ENCODE measurements at regions of chr22 and their contacts with region 1.

Region 1: GRCh38 chr22:50525390-50526068 is at the start of gene SCO2:
- DNase-seq: peak; percentile 99
- H3K4me3 Mint-ChIP-seq: peak within 1 kb of the TSS; percentile 90
- H3K27ac Mint-ChIP-seq: peak within 1 kb of the TSS; percentile 88
- H3K4me1 Mint-ChIP-seq: peaks cover 32% of the 10 kb centered on the region
- H3K27me3 Mint-ChIP-seq: no peaks in the 10 kb centered on the region
- total RNA-seq, gene SCO2: 5.3 and 11.2 TPM in 2 replicates

Region 2: GRCh38 chr22:49960159-49961004 is 565.1 kb before region 1 on chr22 and contains the start of gene PIM3:
- intact Hi-C with region 1: loop called (anchors 5 kb)
- DNase-seq: peak; percentile 98
- H3K4me3 Mint-ChIP-seq: peak within 1 kb of the TSS; percentile 94
- H3K27ac Mint-ChIP-seq: peak within 1 kb of the TSS; percentile 95
- H3K4me1 Mint-ChIP-seq: peaks cover 17% of the 10 kb centered on the region
- H3K27me3 Mint-ChIP-seq: no peaks in the 10 kb centered on the region
- total RNA-seq, gene PIM3: 302 and 304 TPM in 2 replicates

Region 3: DNA sequence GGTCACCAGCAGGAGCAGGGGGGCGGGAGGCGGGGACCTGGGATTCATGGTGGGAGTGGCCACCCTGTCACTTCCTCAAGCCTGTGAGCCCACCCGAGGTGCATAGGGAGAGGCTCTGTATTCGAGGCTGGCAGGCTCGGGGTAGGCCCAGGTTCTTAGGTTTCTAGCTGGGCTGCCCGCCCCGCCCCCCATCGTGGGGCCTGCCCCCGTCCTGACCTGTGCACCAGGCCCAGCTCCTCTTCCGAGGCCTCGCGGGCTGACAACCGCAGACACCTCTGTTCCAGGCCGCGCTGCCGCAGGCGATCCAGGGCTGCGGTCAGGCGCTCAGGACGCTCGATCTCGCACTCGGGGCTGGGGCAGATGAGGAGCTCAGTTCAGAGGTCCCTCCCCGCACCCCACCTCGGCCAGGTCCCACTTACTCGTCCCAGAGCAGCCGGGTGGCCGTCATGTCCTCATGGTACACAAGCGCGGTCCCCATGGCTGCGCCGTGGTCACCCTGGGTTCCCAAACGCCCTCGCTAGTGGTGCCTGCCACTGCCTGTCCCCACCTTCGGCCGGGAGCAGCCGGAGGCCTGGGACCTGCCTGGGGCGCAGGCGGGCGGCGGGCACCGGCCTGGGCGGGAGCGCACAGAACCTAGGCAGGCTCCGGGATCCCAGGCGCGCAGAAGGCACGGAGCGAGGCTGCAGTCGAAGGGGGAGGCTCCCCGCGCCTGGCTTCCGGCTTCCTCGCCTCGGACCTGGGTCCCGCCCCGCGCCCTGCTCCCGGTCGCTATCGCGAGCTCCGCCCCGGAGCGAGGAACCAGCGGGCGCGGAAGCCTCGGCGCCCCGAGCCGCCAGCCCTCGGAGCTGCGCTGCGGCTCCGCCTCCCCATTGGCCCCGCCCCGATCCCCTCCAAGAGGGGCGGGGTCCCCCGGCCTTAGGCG is 274.7 kb before region 1 on chr22 and contains the start of gene HDAC10:
- intact Hi-C with region 1: loop called (anchors 2 kb)
- DNase-seq: peak; percentile 96
- H3K4me3 Mint-ChIP-seq: peak within 1 kb of the TSS; percentile 84
- H3K27ac Mint-ChIP-seq: peak within 1 kb of the TSS; percentile 80
- H3K4me1 Mint-ChIP-seq: peaks cover 3% of the 10 kb centered on the region
- H3K27me3 Mint-ChIP-seq: no peaks in the 10 kb centered on the region
- total RNA-seq, gene HDAC10: 62.2 and 64.6 TPM in 2 replicates

Region 4: GRCh38 chr22:50474668-50475492 is 50.6 kb before region 1 on chr22 and contains the start of gene SBF1:
- intact Hi-C with region 1: loop called (anchors 5 kb)
- DNase-seq: peak; percentile 98
- H3K4me3 Mint-ChIP-seq: peak within 1 kb of the TSS; percentile 95
- H3K27ac Mint-ChIP-seq: peak within 1 kb of the TSS; percentile 93
- H3K4me1 Mint-ChIP-seq: peaks cover 39% of the 10 kb centered on the region
- H3K27me3 Mint-ChIP-seq: peaks cover 11% of the 10 kb centered on the region
- total RNA-seq, gene SBF1: 108 and 115 TPM in 2 replicates

Region 5: GRCh38 chr22:50562523-50563412 is 37.2 kb after region 1 on chr22 and contains the start of gene SYCE3:
- intact Hi-C with region 1: loop called (anchors 1 kb)
- DNase-seq: peak; percentile 100
- H3K4me3 Mint-ChIP-seq: peak within 1 kb of the TSS; percentile 94
- H3K27ac Mint-ChIP-seq: peak within 1 kb of the TSS; percentile 85
- H3K4me1 Mint-ChIP-seq: peaks cover 21% of the 10 kb centered on the region
- H3K27me3 Mint-ChIP-seq: peaks cover 14% of the 10 kb centered on the region
- total RNA-seq, gene SYCE3: 0.69 TPM in 1 of 2 replicates, not detected in the other

Region 6: DNA sequence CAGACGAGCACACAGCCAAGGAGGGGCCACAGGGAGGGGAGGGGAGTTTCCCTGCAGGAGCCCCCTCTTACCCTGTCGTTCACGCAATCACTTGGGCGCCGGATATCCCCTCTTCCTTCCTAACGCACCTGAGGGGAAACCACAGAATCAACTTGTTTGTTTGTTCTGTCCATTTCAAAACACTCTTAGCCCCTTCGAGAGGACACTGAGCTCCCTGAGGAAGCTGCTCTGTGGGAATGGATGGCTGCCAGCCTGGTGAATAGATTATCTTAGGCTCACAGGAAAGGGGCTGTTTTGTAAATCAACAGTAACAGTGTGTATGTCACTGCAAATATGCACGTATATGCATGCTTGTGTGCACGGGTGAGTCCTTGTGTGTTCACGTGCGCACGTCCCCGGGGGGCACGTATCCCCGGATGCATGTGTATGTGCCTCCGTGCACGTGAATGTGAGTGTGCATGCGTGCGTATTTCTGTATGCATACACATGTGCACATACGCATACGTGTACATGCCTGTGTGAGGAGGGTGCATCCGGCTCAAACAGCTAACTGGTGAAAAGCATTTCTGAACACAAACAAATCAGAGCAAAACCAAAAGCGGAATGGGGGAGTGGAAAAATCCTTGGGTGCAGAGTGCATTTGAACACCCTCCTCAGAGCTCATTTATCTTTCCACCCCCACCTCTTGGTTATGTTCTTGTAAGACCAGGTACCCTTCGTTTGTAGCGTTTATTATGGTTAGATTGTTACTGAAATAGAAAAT is 95.2 kb after region 1 on chr22:
- intact Hi-C with region 1: loop called (anchors 1 kb)
- DNase-seq: peak; percentile 92
- H3K4me3 Mint-ChIP-seq: peak overlapping the region; percentile 85
- H3K27ac Mint-ChIP-seq: peak overlapping the region; percentile 99
- H3K4me1 Mint-ChIP-seq: peaks cover 35% of the 10 kb centered on the region
- H3K27me3 Mint-ChIP-seq: no peaks in the 10 kb centered on the region

Measured in activated CD4-positive, alpha-beta T cell treated with anti-CD3 and anti-CD28 coated beads, Interleukin-2, amount 10 ng/mL, durations not matched to agents 24 days and 14 days (primary cell).